AG04450 (cell line): ENCODE measurements at regions of chr4 and their contacts with region 1.

Region 1: DNA sequence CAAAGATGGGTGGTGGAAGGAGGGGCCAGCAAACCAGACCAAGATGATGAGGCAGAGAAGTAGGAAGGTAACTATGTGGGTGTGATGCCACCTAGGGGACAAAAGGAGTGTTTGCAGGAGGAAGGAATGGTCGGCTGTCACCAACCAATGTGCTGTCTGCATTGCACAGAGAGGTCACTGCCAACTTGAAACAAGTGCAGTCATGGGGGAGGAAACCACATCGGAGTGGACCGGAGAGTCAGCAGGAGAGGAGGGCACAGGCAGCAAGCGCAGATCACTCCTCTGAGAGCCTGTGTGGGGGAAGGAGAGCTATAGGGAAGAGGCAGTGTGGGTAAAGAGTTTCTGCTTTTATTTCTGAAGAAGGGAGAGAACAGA is 38.5 kb upstream of the FGFBP2 start:
- DNase-seq: peak; percentile 45
- H3K4me3 ChIP-seq: no peak overlapping the region
- H3K27ac ChIP-seq: no peak overlapping the region
- H3K27me3 ChIP-seq: peaks cover 31% of the 10 kb centered on the region
- CTCF ChIP-seq: peak; percentile 94

Region 2: DNA sequence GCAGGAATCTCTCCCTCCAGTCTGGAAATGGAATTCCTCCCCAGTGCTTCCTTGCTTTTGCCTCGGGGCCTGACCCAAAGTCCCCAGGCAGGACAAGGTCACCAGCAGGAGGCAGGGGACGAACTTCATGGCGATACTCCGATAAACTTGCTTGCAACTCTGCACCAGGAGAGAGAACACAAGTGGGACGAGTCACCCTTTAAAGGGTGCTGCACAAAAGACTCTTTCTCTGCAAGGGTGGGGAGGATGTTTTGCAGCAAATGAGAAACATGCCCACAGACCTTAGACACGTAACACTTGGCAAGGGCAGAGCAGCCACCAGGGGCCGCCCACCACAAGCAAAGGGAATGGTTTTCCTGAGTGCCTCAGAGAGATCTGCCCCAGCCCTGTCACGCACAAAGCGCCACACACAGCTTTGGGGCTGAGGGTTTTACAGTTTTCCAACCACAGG is 38.4 kb before region 1 on chr4 and contains the start of gene FGFBP2:
- CTCF ChIA-PET with region 1: interaction called, 17 read pairs
- POLR2A ChIA-PET with region 1: no interaction called
- DNase-seq: no peak
- H3K4me3 ChIP-seq: no peak within 1 kb of the TSS
- H3K27ac ChIP-seq: no peak within 1 kb of the TSS
- H3K27me3 ChIP-seq: peaks cover 15% of the 10 kb centered on the region
- CTCF ChIP-seq: peak; percentile 57
- polyA plus RNA-seq, gene FGFBP2: not detected in 2 replicates

Region 3: DNA sequence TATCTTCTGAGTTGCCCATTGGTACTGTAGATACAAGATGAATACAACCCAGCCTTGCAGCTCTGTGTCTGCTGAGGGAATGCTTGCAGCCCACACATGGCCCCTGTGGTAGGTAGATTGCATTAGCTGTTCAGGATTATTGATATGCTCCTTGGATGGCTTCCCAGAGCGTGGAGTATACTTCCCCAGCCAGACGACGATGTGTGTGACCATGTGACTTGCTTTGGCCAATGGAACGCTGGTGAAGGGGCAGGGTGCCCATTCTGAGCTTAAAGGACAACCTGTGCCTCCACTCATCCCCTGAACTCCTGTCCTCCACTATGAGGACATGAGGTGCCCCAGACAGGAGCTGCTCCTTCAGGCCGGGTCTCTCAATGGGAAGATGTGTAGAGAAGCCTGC is 14.6 kb before region 1 on chr4:
- CTCF ChIA-PET with region 1: interaction called, 11 read pairs
- POLR2A ChIA-PET with region 1: no interaction called
- DNase-seq: no peak
- H3K4me3 ChIP-seq: no peak overlapping the region
- H3K27ac ChIP-seq: no peak overlapping the region
- H3K27me3 ChIP-seq: peaks cover 11% of the 10 kb centered on the region
- CTCF ChIP-seq: no peak